Heart right ventricle (tissue), 16 donors: ENCODE measurements at regions of chr9 and their contacts with region 1.

Region 1: DNA sequence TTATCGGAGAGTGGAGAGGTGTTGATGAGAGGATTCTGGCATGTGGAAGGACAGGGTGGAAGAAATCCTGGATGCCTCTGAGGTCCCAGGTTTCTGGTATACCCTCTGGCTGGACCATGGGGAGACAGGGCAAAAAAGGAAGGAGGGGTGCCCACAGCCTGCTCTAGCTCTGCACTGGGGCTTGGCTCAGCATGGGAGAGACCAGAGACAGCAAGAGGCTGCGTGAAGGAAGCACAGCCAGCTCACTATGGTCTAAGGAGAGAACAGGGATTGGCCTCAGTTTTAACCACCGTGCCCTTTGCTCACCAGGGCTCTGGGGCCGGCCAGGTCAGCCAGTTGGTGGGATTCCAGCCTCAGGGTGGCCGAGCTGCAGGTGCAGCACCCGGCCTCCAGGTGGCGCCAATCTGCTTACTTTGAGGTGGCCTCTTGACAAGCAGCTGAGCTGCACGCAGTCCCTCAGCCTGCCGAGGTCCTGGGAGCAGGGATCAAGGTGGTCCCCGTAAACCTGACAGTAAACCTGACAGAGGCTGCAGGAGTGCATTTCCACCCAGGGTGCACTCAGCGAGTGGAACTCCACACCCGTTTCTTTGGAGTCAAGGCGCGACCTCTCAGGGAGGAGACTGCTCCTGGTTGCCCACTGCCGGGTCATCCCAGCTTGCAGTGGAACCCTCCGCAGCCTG is 25.0 kb upstream of the SPTLC1 start:
- DNase-seq: peak; percentile 66 to 78
- ATAC-seq: peak; percentile 57 to 85 (median 65)
- H3K4me3 ChIP-seq: peak overlapping the region in 9 of 10 donors; percentile 4 to 53 (median 48)
- H3K27ac ChIP-seq: no peak overlapping the region
- H3K4me1 ChIP-seq: peaks cover 0 to 16% (median 11%) of the 10 kb centered on the region in 9 donors
- H3K27me3 ChIP-seq: peaks cover 0 to 28% (median 14%) of the 10 kb centered on the region in 7 donors
- CTCF ChIP-seq: peak; percentile 74 to 96 (median 90)

Region 2: DNA sequence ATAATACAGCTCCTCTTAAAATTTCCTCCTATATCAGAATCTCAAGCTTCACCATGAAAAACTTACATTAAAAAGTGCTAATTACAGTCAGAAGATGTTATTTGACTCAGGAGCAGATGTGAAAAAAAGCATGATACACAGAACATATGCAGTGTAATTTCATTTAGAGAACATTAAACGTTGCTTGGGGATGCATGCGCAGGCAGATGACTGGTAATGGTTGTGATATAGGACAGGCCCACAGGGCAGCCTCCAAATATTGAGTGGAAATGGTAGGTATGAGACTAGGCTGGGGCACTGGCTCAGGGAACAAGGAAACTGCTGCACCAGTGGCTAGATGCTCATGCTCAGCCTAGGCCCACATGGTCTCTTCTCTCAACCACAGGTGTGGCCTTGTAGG is 83.5 kb after region 1 on chr9:
- intact Hi-C with region 1: loop called in 1 of 10 experiments (anchors 10 kb)
- DNase-seq: no peak
- ATAC-seq: no peak
- H3K4me3 ChIP-seq: no peak overlapping the region
- H3K27ac ChIP-seq: no peak overlapping the region
- H3K4me1 ChIP-seq: no peaks in the 10 kb centered on the region
- H3K27me3 ChIP-seq: no peaks in the 10 kb centered on the region
- CTCF ChIP-seq: no peak

Region 3: GRCh38 chr9:92234514-92234913 is 94.3 kb after region 1 on chr9:
- intact Hi-C with region 1: loop called in 5 of 10 experiments (anchors 2 to 10 kb)
- DNase-seq: no peak
- ATAC-seq: no peak
- H3K4me3 ChIP-seq: no peak overlapping the region
- H3K27ac ChIP-seq: no peak overlapping the region
- H3K4me1 ChIP-seq: no peaks in the 10 kb centered on the region
- H3K27me3 ChIP-seq: no peaks in the 10 kb centered on the region
- CTCF ChIP-seq: no peak

Region 4: GRCh38 chr9:92242260-92243136 is 102.3 kb after region 1 on chr9:
- intact Hi-C with region 1: loop called in 7 of 10 experiments (anchors 1 to 10 kb)
- DNase-seq: no peak
- ATAC-seq: no peak
- H3K4me3 ChIP-seq: no peak overlapping the region
- H3K27ac ChIP-seq: no peak overlapping the region
- H3K4me1 ChIP-seq: no peaks in the 10 kb centered on the region
- H3K27me3 ChIP-seq: no peaks in the 10 kb centered on the region
- CTCF ChIP-seq: peak in 7 of 9 donors; percentile 9 to 43 (median 26)

Region 5: DNA sequence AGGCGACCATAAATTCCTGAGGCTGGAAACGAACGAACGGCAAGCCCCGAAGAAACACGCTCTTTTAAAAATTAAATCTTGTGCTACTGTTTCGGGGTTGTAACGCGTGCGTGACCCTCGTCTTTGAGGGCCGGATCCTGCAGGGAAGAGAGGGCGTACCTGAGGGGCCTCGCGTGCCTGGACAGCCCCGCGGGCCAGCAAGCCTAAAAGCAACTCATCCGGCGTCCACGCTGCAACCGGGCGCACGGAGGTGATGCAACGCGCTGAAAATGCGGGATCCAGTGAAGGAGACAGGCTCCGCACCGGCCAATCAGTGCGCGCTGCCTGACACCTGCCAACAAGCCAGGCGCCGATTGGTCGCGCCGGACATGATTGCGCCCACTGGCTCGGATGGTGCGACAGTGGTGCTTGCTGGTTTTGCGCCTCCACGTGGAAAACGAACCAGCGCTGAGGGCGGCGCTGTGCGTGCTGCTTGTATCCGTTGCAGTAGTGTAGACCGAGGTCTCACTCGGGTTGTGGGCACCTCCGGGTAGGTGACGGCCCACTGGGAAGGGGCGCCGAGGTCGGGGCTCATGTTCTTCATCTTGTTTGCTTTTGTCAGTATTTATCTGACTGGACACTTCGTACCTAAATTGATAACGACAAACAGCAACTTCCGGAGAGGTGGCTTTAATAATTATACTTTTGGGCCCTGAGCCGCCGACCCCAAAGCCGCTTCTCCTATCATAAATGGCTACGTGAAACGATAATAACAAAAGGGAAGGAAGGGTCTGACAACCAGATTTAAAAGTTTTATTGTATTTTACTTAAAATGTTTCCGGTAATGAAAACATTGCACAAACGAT is 153.5 kb after region 1 on chr9 and contains the start of gene IARS1:
- intact Hi-C with region 1: loop called in 3 of 10 experiments (anchors 5 to 10 kb)
- DNase-seq: peak; percentile 98 to 99
- ATAC-seq: peak; percentile 99 to 100 (median 100)
- H3K4me3 ChIP-seq: peak within 1 kb of the TSS; percentile 60 to 92 (median 78)
- H3K27ac ChIP-seq: peak within 1 kb of the TSS; percentile 46 to 87 (median 74)
- H3K4me1 ChIP-seq: peaks cover 0 to 32% (median 27%) of the 10 kb centered on the region in 9 donors
- H3K27me3 ChIP-seq: no peaks in the 10 kb centered on the region
- CTCF ChIP-seq: peak in 6 of 9 donors; percentile 13 to 65 (median 47)
- total RNA-seq, gene IARS1: 48.0 to 79.6 (median 62.7) TPM